Endothelial cell of umbilical vein (primary cell): ENCODE measurements at regions of chr16 and their contacts with region 1.

Region 1: GRCh38 chr16:19502395-19503131 is 19.3 kb downstream of the GDE1 start:
- DNase-seq: peak; percentile 73
- H3K4me3 ChIP-seq: no peak overlapping the region
- H3K27ac ChIP-seq: no peak overlapping the region
- H3K4me1 ChIP-seq: peaks cover 7% of the 10 kb centered on the region
- H3K27me3 ChIP-seq: no peaks in the 10 kb centered on the region
- CTCF ChIP-seq: peak; percentile 71 to 77
- POLR2A ChIP-seq: no peak

Region 2: DNA sequence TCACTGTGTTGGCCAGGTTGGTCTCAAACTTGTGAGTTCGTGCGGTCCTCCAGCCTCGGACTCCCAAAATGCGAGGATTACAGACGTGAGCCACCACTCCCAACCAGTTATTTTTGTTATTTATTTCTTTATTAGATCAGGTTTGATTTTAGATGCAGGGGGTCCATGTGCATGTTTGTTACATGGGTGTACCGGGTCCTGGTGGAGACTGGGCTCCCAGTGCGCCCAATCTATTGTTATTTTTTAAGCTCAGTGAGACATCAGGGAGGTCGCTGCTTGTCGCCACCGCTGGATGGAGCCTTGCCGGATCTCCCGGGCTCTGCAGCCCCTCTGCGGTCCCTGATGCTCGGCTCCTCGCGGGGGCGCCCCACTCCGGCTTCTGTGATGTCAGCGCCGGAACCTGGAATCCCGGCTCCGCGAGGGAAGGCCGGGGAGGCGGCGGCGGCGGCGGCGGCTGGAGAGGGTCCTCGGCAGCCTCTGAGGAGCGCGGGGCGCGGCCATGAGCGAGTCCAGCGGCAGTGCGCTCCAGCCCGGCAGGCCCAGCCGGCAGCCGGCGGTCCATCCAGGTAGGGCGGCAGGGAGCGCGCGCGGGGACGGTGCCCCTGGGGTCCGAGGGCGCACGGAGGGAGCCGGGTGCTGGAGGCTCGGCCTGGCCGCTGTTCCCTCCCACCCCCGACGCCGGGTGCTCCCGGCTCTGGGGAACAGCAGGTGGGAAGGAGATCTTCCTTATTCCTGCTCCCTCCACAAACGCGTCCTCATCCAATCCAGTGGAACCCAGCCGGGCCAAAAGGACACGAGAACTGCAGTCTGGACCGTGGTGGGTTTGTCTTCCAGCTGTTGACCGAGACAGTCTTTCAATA is 518.8 kb before region 1 on chr16 and contains the start of gene TMC7:
- CTCF ChIA-PET with region 1: interaction called, 21 read pairs
- POLR2A ChIA-PET with region 1: no interaction called
- dilution Hi-C with region 1: no loop called
- intact Hi-C with region 1: no loop called
- DNase-seq: peak; percentile 89
- H3K4me3 ChIP-seq: peak within 1 kb of the TSS; percentile 34 to 83 (median 64)
- H3K27ac ChIP-seq: peak within 1 kb of the TSS; percentile 2
- H3K4me1 ChIP-seq: peaks cover 7% of the 10 kb centered on the region
- H3K27me3 ChIP-seq: peaks cover 0 to 2% of the 10 kb centered on the region in 2 experiments
- CTCF ChIP-seq: peak; percentile 95
- POLR2A ChIP-seq: no peak
- total RNA-seq, gene TMC7: 6.9 and 7.0 TPM in 2 replicates

Region 3: GRCh38 chr16:19167710-19168370 is 334.7 kb before region 1 on chr16 and contains the start of gene SYT17:
- CTCF ChIA-PET with region 1: interaction called, 5 read pairs
- POLR2A ChIA-PET with region 1: no interaction called
- dilution Hi-C with region 1: no loop called
- intact Hi-C with region 1: loop called (anchors 1 kb)
- DNase-seq: peak; percentile 65
- H3K4me3 ChIP-seq: peak within 1 kb of the TSS; percentile 7 to 45 (median 44)
- H3K27ac ChIP-seq: no peak within 1 kb of the TSS
- H3K4me1 ChIP-seq: peaks cover 3% of the 10 kb centered on the region
- H3K27me3 ChIP-seq: peaks cover 6 to 32% of the 10 kb centered on the region in 2 experiments
- CTCF ChIP-seq: peak; percentile 75 to 76
- POLR2A ChIP-seq: no peak
- total RNA-seq, gene SYT17: 1.8 and 1.9 TPM in 2 replicates

Region 4: DNA sequence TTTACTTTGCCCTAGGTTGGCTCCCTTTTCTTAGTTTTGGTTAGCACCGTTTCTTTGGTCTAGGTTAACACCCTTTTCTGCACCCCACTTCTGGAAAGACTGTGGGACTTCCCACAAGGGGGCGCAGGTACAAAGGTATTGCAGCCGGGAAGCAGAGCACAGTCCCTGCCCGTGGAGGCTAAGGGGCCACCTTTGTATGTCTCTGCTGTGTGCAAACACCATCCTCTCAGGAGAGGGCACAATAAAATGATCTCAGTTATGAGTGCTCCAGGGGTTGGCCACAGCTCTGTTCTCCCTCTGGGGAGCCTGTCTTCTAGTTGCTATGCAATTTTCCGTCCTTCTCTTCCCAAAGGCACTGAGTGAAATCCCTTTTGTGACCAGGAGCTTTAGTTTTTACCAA is 113.3 kb before region 1 on chr16:
- CTCF ChIA-PET with region 1: interaction called, 71 read pairs
- POLR2A ChIA-PET with region 1: no interaction called
- dilution Hi-C with region 1: no loop called
- intact Hi-C with region 1: loop called (anchors 1 kb)
- DNase-seq: peak; percentile 19
- H3K4me3 ChIP-seq: no peak overlapping the region
- H3K27ac ChIP-seq: no peak overlapping the region
- H3K4me1 ChIP-seq: no peaks in the 10 kb centered on the region
- H3K27me3 ChIP-seq: no peaks in the 10 kb centered on the region
- CTCF ChIP-seq: peak; percentile 24 to 42
- POLR2A ChIP-seq: no peak

Region 5: DNA sequence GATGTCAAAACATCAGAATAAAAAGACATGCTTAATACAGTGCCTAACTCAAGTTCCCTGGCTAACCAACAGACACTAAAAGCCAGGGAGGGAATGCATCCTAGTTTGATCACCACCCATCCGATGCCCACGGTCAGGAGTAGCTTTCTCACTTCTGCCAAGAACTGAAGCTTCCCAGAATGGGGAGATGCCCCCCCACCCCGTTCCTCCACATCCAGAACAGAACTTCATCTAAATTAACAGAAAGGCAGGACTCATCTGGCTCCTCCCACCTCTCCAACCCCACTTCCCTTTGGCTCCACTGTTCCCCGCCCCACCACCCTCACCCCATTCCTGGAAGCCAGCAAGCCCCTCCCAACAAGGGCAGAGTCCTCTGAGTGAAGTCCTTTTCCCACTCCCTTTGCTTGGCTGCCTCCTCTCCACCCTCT is 14.3 kb before region 1 on chr16:
- CTCF ChIA-PET with region 1: interaction called, 24 read pairs
- POLR2A ChIA-PET with region 1: no interaction called
- dilution Hi-C with region 1: no loop called
- intact Hi-C with region 1: no loop called
- DNase-seq: no peak
- H3K4me3 ChIP-seq: no peak overlapping the region
- H3K27ac ChIP-seq: no peak overlapping the region
- H3K4me1 ChIP-seq: no peaks in the 10 kb centered on the region
- H3K27me3 ChIP-seq: no peaks in the 10 kb centered on the region
- CTCF ChIP-seq: no peak
- POLR2A ChIP-seq: no peak

Region 6: DNA sequence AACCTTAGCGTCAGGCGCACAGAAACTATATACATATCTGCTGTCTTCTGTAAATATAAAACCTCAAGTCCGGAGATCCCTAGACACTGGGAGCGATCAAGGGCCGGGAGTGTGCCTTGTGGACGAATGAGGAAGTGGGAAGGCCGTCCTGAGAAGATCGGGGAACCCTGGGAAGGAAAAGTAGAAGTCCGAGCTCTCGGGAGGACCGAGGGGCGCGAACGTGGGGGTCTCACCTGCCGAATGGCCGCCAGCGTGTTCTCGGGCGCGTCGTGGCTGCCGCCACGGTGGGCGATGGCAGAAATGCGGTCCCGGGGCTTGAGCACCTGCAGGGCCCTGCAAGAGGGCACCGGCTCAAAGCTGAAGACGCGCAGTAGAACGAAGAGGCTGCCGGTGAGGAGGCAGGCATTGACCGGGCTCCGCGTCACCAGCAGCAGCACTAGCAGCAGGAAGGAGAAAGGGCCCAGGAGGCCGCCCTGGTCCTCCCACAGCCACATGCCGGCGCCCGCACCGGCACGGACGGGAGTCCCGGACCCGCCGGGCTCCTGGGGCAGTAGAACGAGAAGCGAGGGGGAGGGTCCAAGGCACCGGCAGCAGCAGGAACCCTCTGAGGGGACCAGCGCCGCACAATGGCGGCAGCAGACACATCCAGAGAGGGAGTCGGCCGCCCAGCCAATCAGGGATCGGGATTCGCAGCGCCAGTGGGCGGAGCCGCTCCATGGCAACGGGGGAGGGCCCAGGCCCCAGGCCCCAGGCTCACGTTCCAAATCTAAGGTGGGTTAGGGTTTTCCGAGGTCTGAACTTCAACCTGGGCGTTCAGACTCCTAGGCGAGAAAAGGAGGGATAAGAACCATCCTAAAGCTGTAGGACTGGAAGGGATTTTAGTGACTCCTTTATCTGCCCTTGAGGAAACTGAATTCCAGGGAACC is 19.2 kb after region 1 on chr16 and contains the start of gene GDE1:
- CTCF ChIA-PET with region 1: interaction called, 28 read pairs
- POLR2A ChIA-PET with region 1: no interaction called
- dilution Hi-C with region 1: no loop called
- intact Hi-C with region 1: no loop called
- DNase-seq: peak; percentile 92
- H3K4me3 ChIP-seq: peak within 1 kb of the TSS; percentile 88 to 93 (median 89)
- H3K27ac ChIP-seq: peak within 1 kb of the TSS; percentile 50
- H3K4me1 ChIP-seq: peaks cover 21% of the 10 kb centered on the region
- H3K27me3 ChIP-seq: no peaks in the 10 kb centered on the region
- CTCF ChIP-seq: peak in 1 of 2 donors; percentile 64
- POLR2A ChIP-seq: peak; percentile 80
- total RNA-seq, gene GDE1: 50.5 and 51.5 TPM in 2 replicates

Region 7: DNA sequence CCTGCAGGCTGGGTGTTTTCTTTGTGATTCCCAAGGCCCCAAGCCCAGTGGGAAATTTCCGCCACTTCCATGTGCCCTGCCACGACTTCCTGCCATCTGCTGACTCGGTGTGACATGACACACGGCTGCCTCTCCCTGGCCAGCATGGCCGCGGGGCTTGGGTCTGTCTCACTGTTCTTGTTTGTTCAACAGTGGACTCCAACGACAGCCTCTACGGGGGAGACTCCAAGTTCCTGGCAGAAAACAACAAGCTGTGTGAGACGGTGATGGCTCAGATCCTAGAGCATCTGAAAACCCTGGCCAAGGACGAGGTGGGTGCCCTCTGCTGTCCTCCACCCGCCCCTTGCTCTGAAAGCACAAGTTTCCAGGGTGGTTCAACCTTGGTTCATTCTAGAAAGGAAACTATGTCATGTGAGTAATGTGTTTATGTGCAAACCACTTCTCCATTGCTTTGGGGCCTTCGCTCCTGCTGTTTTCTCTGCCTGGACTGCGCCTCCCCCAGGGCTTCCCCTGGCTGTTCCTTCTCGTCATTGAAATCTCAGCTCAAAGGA is 188.7 kb after region 1 on chr16:
- CTCF ChIA-PET with region 1: no interaction called
- POLR2A ChIA-PET with region 1: no interaction called
- dilution Hi-C with region 1: no loop called
- intact Hi-C with region 1: no loop called
- DNase-seq: peak; percentile 25
- H3K4me3 ChIP-seq: no peak overlapping the region
- H3K27ac ChIP-seq: no peak overlapping the region
- H3K4me1 ChIP-seq: peaks cover 3% of the 10 kb centered on the region
- H3K27me3 ChIP-seq: no peaks in the 10 kb centered on the region
- CTCF ChIP-seq: no peak
- POLR2A ChIP-seq: no peak

Region 8: GRCh38 chr16:19765860-19766553 is 263.4 kb after region 1 on chr16:
- CTCF ChIA-PET with region 1: no interaction called
- POLR2A ChIA-PET with region 1: no interaction called
- dilution Hi-C with region 1: no loop called
- intact Hi-C with region 1: no loop called
- DNase-seq: peak; percentile 96
- H3K4me3 ChIP-seq: no peak overlapping the region
- H3K27ac ChIP-seq: peak overlapping the region; percentile 45
- H3K4me1 ChIP-seq: peaks cover 17% of the 10 kb centered on the region
- H3K27me3 ChIP-seq: no peaks in the 10 kb centered on the region
- CTCF ChIP-seq: no peak
- POLR2A ChIP-seq: no peak